ENCODE measurements at regions of chr2 and their contacts with region 1.

Region 1: GRCh38 chr2:216023055-216023648 is 9.8 kb upstream of the MREG start:
- DNase-seq: no peak
- H3K4me3 ChIP-seq: no peak overlapping the region
- H3K27ac ChIP-seq: no peak overlapping the region
- H3K4me1 ChIP-seq: peaks cover 0 to 6% (median 0%) of the 10 kb centered on the region in 3 donors
- H3K27me3 ChIP-seq: no peaks in the 10 kb centered on the region
- CTCF ChIP-seq: peak; percentile 20 to 72 (median 52)
- POLR2A ChIP-seq: no peak

Region 2: GRCh38 chr2:215425021-215425782 is 598.0 kb before region 1 on chr2:
- intact Hi-C with region 1: loop called (anchors 10 kb)
- DNase-seq: no peak
- H3K4me3 ChIP-seq: no peak overlapping the region
- H3K27ac ChIP-seq: peak overlapping the region in 2 of 4 donors; percentile 15 to 49
- H3K4me1 ChIP-seq: peaks cover 0 to 14% (median 0%) of the 10 kb centered on the region in 3 donors
- H3K27me3 ChIP-seq: no peaks in the 10 kb centered on the region
- CTCF ChIP-seq: no peak
- POLR2A ChIP-seq: no peak

Region 3: DNA sequence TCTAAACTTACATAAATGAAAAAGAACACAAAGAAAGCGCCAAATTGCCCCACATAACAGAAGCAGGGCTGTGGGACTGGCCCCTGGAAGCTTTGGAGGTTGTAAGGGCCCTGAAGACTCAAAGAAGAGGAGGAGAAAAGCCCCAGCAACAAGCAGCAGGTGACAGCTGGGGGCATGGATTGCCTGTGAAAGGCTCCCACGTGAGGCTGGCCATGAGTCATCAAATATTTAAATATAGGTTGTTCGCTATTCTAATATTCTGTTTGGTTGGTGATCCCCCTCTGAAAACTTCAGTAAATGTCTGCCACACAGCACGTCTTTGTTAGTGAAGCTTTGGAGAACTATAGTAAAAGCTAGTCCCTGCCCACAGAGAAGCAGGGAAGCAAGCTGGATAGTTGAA is 142.2 kb before region 1 on chr2:
- intact Hi-C with region 1: no loop called
- DNase-seq: no peak
- H3K4me3 ChIP-seq: no peak overlapping the region
- H3K27ac ChIP-seq: no peak overlapping the region
- H3K4me1 ChIP-seq: peaks cover 0 to 4% (median 0%) of the 10 kb centered on the region in 3 donors
- H3K27me3 ChIP-seq: no peaks in the 10 kb centered on the region
- CTCF ChIP-seq: no peak
- POLR2A ChIP-seq: no peak

Region 4: GRCh38 chr2:215949991-215950404 is 73.2 kb before region 1 on chr2:
- intact Hi-C with region 1: loop called (anchors 10 kb)
- DNase-seq: no peak
- H3K4me3 ChIP-seq: no peak overlapping the region
- H3K27ac ChIP-seq: no peak overlapping the region
- H3K4me1 ChIP-seq: no peaks in the 10 kb centered on the region
- H3K27me3 ChIP-seq: no peaks in the 10 kb centered on the region
- CTCF ChIP-seq: peak; percentile 34 to 68 (median 46)
- POLR2A ChIP-seq: no peak

Measured in esophagus squamous epithelium (tissue), 5 donors.